Aorta (tissue), 5 donors: ENCODE measurements at regions of chr4 and their contacts with region 1.

Region 1: GRCh38 chr4:142817442-142817841 is 28.7 kb downstream of the INPP4B start:
- DNase-seq: peak in 1 of 2 donors; percentile 60
- ATAC-seq: peak; percentile 75
- H3K4me3 ChIP-seq: no peak overlapping the region
- H3K27ac ChIP-seq: peak overlapping the region; percentile 36 to 74
- H3K4me1 ChIP-seq: peaks cover 0 to 7% of the 10 kb centered on the region in 2 donors
- H3K27me3 ChIP-seq: no peaks in the 10 kb centered on the region

Region 2: DNA sequence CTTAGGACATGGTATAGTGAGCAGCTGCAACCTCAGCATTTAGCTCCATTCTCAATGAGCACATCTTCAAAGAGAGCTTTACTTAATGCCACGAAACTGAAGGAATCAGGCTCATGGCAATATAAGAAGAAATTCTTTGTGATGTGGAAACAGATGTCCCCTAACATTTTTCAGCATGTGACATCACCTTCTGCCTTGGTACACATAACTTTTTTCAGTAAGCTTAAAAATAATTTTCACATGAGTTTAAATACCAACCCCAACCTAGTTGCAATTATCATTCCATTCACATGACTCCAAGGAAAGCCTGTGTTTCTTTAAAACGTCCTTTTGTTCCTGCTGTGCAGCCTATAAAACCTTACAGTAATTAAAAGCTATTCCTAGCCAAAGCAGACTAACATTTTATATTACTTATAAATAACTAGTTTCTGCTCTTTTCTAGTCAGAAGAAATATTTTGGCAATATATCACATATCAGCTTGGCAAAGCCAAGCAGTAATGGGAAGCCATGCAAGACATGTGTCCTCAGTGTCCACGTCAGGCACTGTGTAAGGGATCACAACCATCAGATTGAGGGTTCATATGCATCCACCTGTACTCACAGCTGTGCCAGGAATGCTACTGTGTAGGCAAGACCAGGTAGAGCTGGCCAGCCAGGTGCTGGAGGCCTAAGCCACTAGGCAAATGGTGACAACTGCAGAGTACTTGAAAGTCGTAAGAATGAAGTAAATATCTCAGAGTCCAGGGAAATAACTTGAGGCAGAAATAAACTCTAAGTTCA is 438.0 kb before region 1 on chr4:
- intact Hi-C with region 1: loop called in 1 of 2 experiments (anchors 10 kb)
- DNase-seq: no peak
- ATAC-seq: peak; percentile 52
- H3K4me3 ChIP-seq: no peak overlapping the region
- H3K27ac ChIP-seq: peak overlapping the region in 1 of 2 donors; percentile 33
- H3K4me1 ChIP-seq: peaks cover 2 to 3% of the 10 kb centered on the region in 2 donors
- H3K27me3 ChIP-seq: no peaks in the 10 kb centered on the region

Region 3: GRCh38 chr4:142567199-142567598 is 250.2 kb before region 1 on chr4:
- intact Hi-C with region 1: loop called in 1 of 2 experiments (anchors 10 kb)
- DNase-seq: no peak
- ATAC-seq: no peak
- H3K4me3 ChIP-seq: no peak overlapping the region
- H3K27ac ChIP-seq: no peak overlapping the region
- H3K4me1 ChIP-seq: no peaks in the 10 kb centered on the region
- H3K27me3 ChIP-seq: no peaks in the 10 kb centered on the region

Region 4: GRCh38 chr4:143184217-143185116 is 367.0 kb after region 1 on chr4 and contains the start of gene USP38:
- intact Hi-C with region 1: no loop called
- DNase-seq: peak; percentile 92 to 95
- ATAC-seq: peak; percentile 99
- H3K4me3 ChIP-seq: peak within 1 kb of the TSS; percentile 94 to 96
- H3K27ac ChIP-seq: peak within 1 kb of the TSS; percentile 36 to 82
- H3K4me1 ChIP-seq: no peaks in the 10 kb centered on the region
- H3K27me3 ChIP-seq: no peaks in the 10 kb centered on the region
- total RNA-seq, gene USP38: 17.1 to 18.4 TPM